ENCODE measurements at regions of chr4 and their contacts with region 1.

Region 1: DNA sequence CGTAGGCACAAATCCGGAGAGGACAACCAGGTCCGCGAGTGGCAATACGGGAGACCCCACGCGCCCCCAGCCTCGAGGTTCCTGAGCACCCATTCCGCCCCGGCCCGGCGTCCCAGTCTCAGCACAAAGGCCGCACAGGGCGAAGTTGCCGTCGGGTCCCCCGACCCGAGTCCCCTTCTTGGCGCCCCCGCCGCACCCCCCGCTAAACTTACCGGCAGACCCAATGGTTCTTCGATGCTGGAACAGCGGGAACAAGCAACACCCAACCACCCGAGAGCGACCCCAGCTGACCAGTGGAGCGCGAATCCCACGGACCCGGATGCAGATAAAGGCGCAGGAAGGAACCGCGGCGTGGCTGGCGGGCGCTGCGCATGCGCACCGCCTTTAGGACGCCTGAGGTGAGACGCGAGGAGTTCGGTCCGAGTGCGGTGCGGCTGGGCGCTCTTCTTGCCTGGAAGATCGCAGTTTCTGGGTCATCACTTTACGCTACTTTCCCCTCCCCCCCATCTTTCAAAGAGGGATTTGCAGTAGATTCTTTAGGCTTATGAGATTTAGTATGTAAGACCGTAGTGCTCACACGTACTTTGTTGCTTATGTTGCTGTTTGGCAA is at the start of gene GNPDA2:
- DNase-seq: peak; percentile 52 to 90 (median 81)
- ATAC-seq: peak; percentile 86
- H3K4me3 ChIP-seq: peak within 1 kb of the TSS; percentile 75 to 91
- H3K4me3 Mint-ChIP-seq: peak within 1 kb of the TSS; percentile 90
- H3K27ac ChIP-seq: peak within 1 kb of the TSS; percentile 53 to 55
- H3K27ac Mint-ChIP-seq: peak within 1 kb of the TSS; percentile 91
- H3K4me1 ChIP-seq: peaks cover 28% of the 10 kb centered on the region
- H3K4me1 Mint-ChIP-seq: peaks cover 44% of the 10 kb centered on the region
- H3K27me3 ChIP-seq: no peaks in the 10 kb centered on the region
- H3K27me3 Mint-ChIP-seq: no peaks in the 10 kb centered on the region
- CTCF ChIP-seq: no peak
- total RNA-seq, gene GNPDA2: 9.8 to 10.7 TPM

Region 2: GRCh38 chr4:44046491-44046890 is 679.9 kb before region 1 on chr4:
- CTCF ChIA-PET with region 1: no interaction called
- POLR2A ChIA-PET with region 1: no interaction called
- intact Hi-C with region 1: no loop called
- DNase-seq: no peak
- ATAC-seq: no peak
- H3K4me3 ChIP-seq: no peak overlapping the region
- H3K4me3 Mint-ChIP-seq: no peak overlapping the region
- H3K27ac ChIP-seq: no peak overlapping the region
- H3K27ac Mint-ChIP-seq: no peak overlapping the region
- H3K4me1 ChIP-seq: no peaks in the 10 kb centered on the region
- H3K4me1 Mint-ChIP-seq: no peaks in the 10 kb centered on the region
- H3K27me3 ChIP-seq: no peaks in the 10 kb centered on the region
- H3K27me3 Mint-ChIP-seq: no peaks in the 10 kb centered on the region
- CTCF ChIP-seq: no peak

Region 3: DNA sequence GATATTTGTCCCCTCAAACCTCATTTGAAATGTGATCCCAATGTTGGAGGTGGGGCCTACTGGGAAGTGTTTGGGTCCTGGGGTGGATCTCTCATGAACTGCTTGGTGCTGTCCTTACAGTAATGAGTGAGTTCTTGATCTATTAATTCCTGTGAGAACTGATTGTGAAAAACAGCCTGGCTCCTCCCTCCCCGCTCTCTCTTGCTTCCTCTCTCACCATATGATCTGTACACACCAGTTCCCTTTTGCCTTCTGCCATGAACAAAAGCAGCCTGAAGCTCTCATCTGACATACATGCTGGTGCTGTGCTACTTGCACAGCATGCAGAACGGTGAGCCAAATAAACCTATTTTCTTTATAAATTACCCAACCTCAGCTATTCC is 63.8 kb before region 1 on chr4:
- CTCF ChIA-PET with region 1: no interaction called
- POLR2A ChIA-PET with region 1: no interaction called
- intact Hi-C with region 1: no loop called
- DNase-seq: no peak
- ATAC-seq: no peak
- H3K4me3 ChIP-seq: no peak overlapping the region
- H3K4me3 Mint-ChIP-seq: no peak overlapping the region
- H3K27ac ChIP-seq: no peak overlapping the region
- H3K27ac Mint-ChIP-seq: no peak overlapping the region
- H3K4me1 ChIP-seq: no peaks in the 10 kb centered on the region
- H3K4me1 Mint-ChIP-seq: no peaks in the 10 kb centered on the region
- H3K27me3 ChIP-seq: no peaks in the 10 kb centered on the region
- H3K27me3 Mint-ChIP-seq: peaks cover 9% of the 10 kb centered on the region
- CTCF ChIP-seq: no peak

Region 4: GRCh38 chr4:44678094-44679041 is 48.0 kb before region 1 on chr4 and contains the start of gene GUF1:
- CTCF ChIA-PET with region 1: interaction called, 3 read pairs
- POLR2A ChIA-PET with region 1: interaction called, 30 read pairs
- intact Hi-C with region 1: loop called (anchors 1 to 2 kb)
- DNase-seq: peak; percentile 78 to 95 (median 89)
- ATAC-seq: peak; percentile 90
- H3K4me3 ChIP-seq: peak within 1 kb of the TSS; percentile 68 to 81
- H3K4me3 Mint-ChIP-seq: peak within 1 kb of the TSS; percentile 99
- H3K27ac ChIP-seq: peak within 1 kb of the TSS; percentile 89 to 90
- H3K27ac Mint-ChIP-seq: peak within 1 kb of the TSS; percentile 100
- H3K4me1 ChIP-seq: peaks cover 20% of the 10 kb centered on the region
- H3K4me1 Mint-ChIP-seq: peaks cover 39% of the 10 kb centered on the region
- H3K27me3 ChIP-seq: no peaks in the 10 kb centered on the region
- H3K27me3 Mint-ChIP-seq: no peaks in the 10 kb centered on the region
- CTCF ChIP-seq: no peak
- total RNA-seq, gene GUF1: 19.1 to 19.2 TPM

Region 5: DNA sequence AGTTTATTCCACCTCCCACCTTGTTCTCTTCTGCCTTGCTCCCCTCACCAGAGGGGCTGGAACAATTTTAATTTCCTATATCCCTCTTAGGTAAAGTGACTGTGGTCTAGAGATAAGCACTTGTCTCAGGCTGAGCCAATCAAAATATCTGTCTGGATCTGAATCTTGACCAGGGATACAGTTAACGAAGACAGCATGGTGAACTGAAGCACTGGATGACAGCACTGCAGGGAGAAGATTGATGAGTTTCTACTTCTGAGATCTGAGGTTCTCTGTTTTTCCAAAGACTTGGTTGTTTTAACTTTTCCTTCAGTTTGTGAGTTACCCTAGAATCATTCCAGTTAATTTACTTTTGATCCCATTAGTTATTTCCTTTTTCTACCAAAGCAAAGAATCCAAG is 13.2 kb before region 1 on chr4:
- CTCF ChIA-PET with region 1: no interaction called
- POLR2A ChIA-PET with region 1: interaction called, 6 read pairs
- intact Hi-C with region 1: loop called in 1 of 2 experiments (anchors 2 kb)
- DNase-seq: no peak
- ATAC-seq: no peak
- H3K4me3 ChIP-seq: no peak overlapping the region
- H3K4me3 Mint-ChIP-seq: no peak overlapping the region
- H3K27ac ChIP-seq: no peak overlapping the region
- H3K27ac Mint-ChIP-seq: no peak overlapping the region
- H3K4me1 ChIP-seq: no peaks in the 10 kb centered on the region
- H3K4me1 Mint-ChIP-seq: peaks cover 12% of the 10 kb centered on the region
- H3K27me3 ChIP-seq: no peaks in the 10 kb centered on the region
- H3K27me3 Mint-ChIP-seq: no peaks in the 10 kb centered on the region
- CTCF ChIP-seq: no peak